ENCODE measurements at regions of chr17 and their contacts with region 1.

Region 1: DNA sequence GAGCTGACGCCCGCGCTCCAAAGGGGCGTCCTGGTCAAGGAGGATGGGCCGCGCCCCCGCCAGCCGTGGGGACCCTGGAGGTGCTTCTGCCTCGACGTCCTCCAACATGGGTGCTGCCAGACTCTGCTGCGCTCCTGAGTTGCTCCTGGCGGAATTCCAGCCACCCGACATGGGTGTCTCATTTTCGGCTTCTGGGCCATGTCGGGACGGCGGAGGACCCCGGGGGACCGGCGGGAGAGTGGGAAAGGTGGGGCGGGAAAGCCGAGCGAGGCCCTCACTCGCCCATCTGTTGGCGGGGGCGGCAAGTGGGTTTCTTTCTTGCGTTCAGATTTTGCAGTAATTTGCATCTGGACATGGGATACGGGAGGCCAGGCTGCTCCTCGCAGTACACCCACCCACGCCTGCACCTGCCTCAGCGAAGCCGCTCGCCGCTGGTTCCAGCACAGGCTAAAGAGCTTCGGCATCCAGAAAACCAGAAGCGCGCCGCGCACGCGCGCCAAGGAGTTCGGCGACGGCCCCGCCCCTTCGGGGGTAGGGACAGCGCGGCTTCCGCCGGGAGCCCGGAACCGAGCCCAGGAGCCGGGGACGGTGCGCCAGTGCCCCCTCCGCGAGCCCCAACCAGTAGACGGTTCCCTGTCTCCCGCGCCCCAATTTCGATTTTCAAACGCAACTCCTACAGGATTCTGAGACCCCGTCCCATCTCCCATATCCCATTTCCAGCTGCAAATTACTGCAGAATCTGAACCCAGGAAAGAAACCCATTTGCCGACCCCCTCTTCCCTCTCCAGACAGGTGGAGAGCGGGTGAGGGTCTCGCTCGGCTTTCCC is at the start of gene ARMC7:
- DNase-seq: peak; percentile 77
- ATAC-seq: peak; percentile 81
- H3K4me3 ChIP-seq: peak within 1 kb of the TSS; percentile 69 to 87 (median 79)
- H3K27ac ChIP-seq: no peak within 1 kb of the TSS
- H3K4me1 ChIP-seq: peaks cover 51% of the 10 kb centered on the region
- H3K27me3 ChIP-seq: peaks cover 0 to 3% of the 10 kb centered on the region in 2 experiments; a peak in 1 of 5 replicates
- CTCF ChIP-seq: no peak
- EP300 ChIP-seq: no peak
- POLR2A ChIP-seq: peak; percentile 56 to 93; a peak in 3 of 4 replicates
- RAD21 ChIP-seq: peak; percentile 40; the same call in 1 of the 2 replicates
- total RNA-seq, gene ARMC7: 4.2 and 4.4 TPM in 2 replicates

Region 2: GRCh38 chr17:75034236-75034908 is 75.2 kb before region 1 on chr17:
- CTCF ChIA-PET with region 1: no interaction called
- POLR2A ChIA-PET with region 1: interaction called, 10 read pairs
- in situ Hi-C with region 1: no loop called
- intact Hi-C with region 1: no loop called
- DNase-seq: peak; percentile 94
- ATAC-seq: peak; percentile 58
- H3K4me3 ChIP-seq: peak overlapping the region; percentile 76 to 93 (median 91)
- H3K27ac ChIP-seq: peak overlapping the region; percentile 94
- H3K4me1 ChIP-seq: peaks cover 37% of the 10 kb centered on the region
- H3K27me3 ChIP-seq: peaks cover 0 to 6% of the 10 kb centered on the region in 2 experiments; a peak in 3 of 5 replicates
- CTCF ChIP-seq: peak; percentile 48
- EP300 ChIP-seq: no peak
- POLR2A ChIP-seq: no peak
- RAD21 ChIP-seq: no peak

Region 3: GRCh38 chr17:75077496-75078283 is 31.9 kb before region 1 on chr17:
- CTCF ChIA-PET with region 1: no interaction called
- POLR2A ChIA-PET with region 1: interaction called, 10 read pairs
- in situ Hi-C with region 1: no loop called
- intact Hi-C with region 1: loop called (anchors 5 kb)
- DNase-seq: no peak
- ATAC-seq: no peak; the same call in 2 of the 3 replicates
- H3K4me3 ChIP-seq: peak overlapping the region; percentile 32 to 66 (median 46); a peak in 5 of 6 replicates
- H3K27ac ChIP-seq: no peak overlapping the region
- H3K4me1 ChIP-seq: peaks cover 92% of the 10 kb centered on the region
- H3K27me3 ChIP-seq: peaks cover 0 to 37% of the 10 kb centered on the region in 2 experiments; a peak in 3 of 5 replicates
- CTCF ChIP-seq: peak; percentile 28; the same call in 1 of the 2 replicates
- EP300 ChIP-seq: no peak
- POLR2A ChIP-seq: no peak
- RAD21 ChIP-seq: no peak

Region 4: DNA sequence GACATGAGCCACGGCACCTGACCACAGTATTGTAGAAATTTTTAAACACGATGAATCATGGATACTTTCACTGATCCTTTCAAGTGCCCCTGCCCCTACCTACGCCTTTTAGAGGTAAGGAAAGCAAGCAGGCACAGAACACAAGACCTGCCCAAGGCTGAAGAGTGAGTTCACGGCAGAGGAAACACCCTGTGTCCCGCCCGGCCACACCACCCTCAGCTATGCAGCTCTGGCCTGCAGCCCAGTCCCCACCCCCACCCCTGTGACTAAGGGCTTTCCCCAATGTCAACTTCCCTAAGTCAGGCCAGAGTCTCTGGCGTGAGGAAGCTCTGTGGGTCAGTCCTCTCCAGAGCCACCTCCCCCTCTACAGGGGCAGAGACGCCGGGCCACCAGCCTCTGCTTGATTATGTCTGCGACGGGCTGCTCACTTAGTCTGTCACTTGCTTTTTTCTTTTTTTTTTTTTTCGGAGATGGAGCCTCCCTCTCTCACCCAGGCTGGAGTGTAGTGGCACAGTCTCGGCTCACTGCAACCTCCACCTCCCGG is 13.5 kb before region 1 on chr17:
- CTCF ChIA-PET with region 1: interaction called, 3 read pairs
- POLR2A ChIA-PET with region 1: interaction called, 14 read pairs
- in situ Hi-C with region 1: no loop called
- intact Hi-C with region 1: no loop called
- DNase-seq: peak; percentile 91
- ATAC-seq: peak; percentile 66
- H3K4me3 ChIP-seq: peak overlapping the region in 1 of 3 experiments; percentile 22; a peak in 1 of 6 replicates
- H3K27ac ChIP-seq: no peak overlapping the region
- H3K4me1 ChIP-seq: peaks cover 61% of the 10 kb centered on the region
- H3K27me3 ChIP-seq: peaks cover 3 to 25% of the 10 kb centered on the region in 2 experiments; a peak in 3 of 5 replicates
- CTCF ChIP-seq: peak; percentile 14
- EP300 ChIP-seq: peak; percentile 69 to 79; a peak in 3 of 4 replicates
- POLR2A ChIP-seq: 0 out of 4 replicates have a peak, but pooled peaks of 1 of the 2 experiments have one; percentile 26
- RAD21 ChIP-seq: peak; percentile 24; the same call in 1 of the 2 replicates

Region 5: DNA sequence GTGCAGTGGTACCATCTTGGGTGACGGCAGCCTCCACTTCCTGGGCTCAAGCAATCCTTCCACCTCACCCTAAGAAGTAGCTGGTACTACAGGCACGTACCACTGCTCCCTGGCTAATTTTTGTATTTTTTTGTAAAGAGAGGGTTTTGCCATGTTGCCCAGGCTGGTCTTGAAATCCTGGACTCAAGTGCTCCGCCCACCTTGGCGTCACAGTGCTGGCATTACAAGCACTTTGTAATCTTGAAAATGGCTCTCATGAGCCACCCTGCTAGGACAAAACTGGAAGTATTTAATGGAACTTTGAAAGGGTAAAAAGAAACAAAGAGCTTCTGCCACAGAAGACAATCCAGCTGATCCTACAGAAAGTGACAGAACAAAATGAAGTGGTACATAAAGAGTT is 63.9 kb after region 1 on chr17:
- CTCF ChIA-PET with region 1: interaction called, 23 read pairs
- POLR2A ChIA-PET with region 1: interaction called, 8 read pairs
- in situ Hi-C with region 1: no loop called
- intact Hi-C with region 1: loop called (anchors 1 kb)
- DNase-seq: no peak
- ATAC-seq: no peak
- H3K4me3 ChIP-seq: no peak overlapping the region
- H3K27ac ChIP-seq: no peak overlapping the region
- H3K4me1 ChIP-seq: no peaks in the 10 kb centered on the region
- H3K27me3 ChIP-seq: no peaks in the 10 kb centered on the region
- CTCF ChIP-seq: no peak
- EP300 ChIP-seq: no peak
- POLR2A ChIP-seq: no peak
- RAD21 ChIP-seq: no peak

Region 6: GRCh38 chr17:75205037-75205792 is 95.6 kb after region 1 on chr17 and contains the start of gene NUP85:
- CTCF ChIA-PET with region 1: interaction called, 10 read pairs
- POLR2A ChIA-PET with region 1: interaction called, 15 read pairs
- in situ Hi-C with region 1: no loop called
- intact Hi-C with region 1: loop called (anchors 1 kb)
- DNase-seq: peak; percentile 96
- ATAC-seq: peak; percentile 88
- H3K4me3 ChIP-seq: peak within 1 kb of the TSS; percentile 82 to 96 (median 86)
- H3K27ac ChIP-seq: peak within 1 kb of the TSS; percentile 97
- H3K4me1 ChIP-seq: peaks cover 40% of the 10 kb centered on the region
- H3K27me3 ChIP-seq: no peaks in the 10 kb centered on the region; a peak in 1 of 5 replicates
- CTCF ChIP-seq: peak; percentile 12
- EP300 ChIP-seq: peak in 1 of 2 experiments; percentile 16; a peak in 1 of 4 replicates
- POLR2A ChIP-seq: peak; percentile 87 to 92
- RAD21 ChIP-seq: peak; percentile 9; the same call in 1 of the 2 replicates
- total RNA-seq, gene NUP85: 122 and 124 TPM in 2 replicates

Region 7: DNA sequence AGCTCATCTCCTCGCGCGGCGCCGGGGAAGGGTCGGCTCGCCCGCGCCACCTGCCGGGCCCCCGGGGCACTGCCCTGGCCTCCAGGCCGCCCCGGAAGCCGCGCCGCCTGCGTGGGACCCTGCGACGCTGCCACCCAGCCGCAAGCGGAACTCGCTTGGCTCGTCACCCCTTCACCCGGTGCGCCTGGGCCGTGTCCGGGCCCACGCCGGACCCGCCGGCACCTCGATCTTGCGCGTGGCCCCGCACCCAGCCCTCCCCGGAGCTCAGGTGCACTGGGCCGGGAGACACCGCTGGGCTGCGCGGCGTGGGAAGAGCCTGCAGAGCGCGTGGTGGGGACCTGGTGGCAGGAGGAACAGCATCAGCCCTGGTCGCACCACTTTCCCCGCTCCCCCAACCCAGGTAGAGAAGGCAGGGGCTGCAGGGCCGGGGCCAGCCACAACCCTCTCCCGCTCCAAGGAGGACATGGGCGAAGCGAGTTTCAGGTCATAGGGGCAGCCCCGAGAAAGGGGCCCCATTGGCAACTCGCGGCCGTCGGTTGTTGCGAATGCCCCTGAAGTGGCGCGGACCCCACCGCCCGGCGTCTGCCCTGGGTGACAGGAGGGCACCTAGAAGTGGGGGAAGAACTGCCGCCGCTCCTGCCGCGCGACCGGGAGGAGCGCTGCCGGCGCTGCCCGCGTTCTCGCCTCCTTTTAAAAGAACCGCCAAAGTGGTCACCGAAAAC is 161.8 kb after region 1 on chr17:
- CTCF ChIA-PET with region 1: no interaction called
- POLR2A ChIA-PET with region 1: no interaction called
- in situ Hi-C with region 1: no loop called
- intact Hi-C with region 1: no loop called
- DNase-seq: peak; percentile 58
- ATAC-seq: peak; percentile 36
- H3K4me3 ChIP-seq: peak overlapping the region; percentile 91 to 98 (median 94)
- H3K27ac ChIP-seq: peak overlapping the region; percentile 77
- H3K4me1 ChIP-seq: peaks cover 43% of the 10 kb centered on the region
- H3K27me3 ChIP-seq: no peaks in the 10 kb centered on the region
- CTCF ChIP-seq: peak; percentile 70
- EP300 ChIP-seq: no peak
- POLR2A ChIP-seq: peak in 1 of 2 experiments; percentile 71; a peak in 2 of 4 replicates
- RAD21 ChIP-seq: peak; percentile 87

Region 8: GRCh38 chr17:75412455-75413317 is 303.1 kb after region 1 on chr17:
- CTCF ChIA-PET with region 1: no interaction called
- POLR2A ChIA-PET with region 1: no interaction called
- in situ Hi-C with region 1: loop called (anchors 5 kb)
- intact Hi-C with region 1: loop called (anchors 5 kb)
- DNase-seq: peak; percentile 79
- ATAC-seq: peak; percentile 78
- H3K4me3 ChIP-seq: peak overlapping the region in 1 of 3 experiments; percentile 35; a peak in 1 of 6 replicates
- H3K27ac ChIP-seq: no peak overlapping the region
- H3K4me1 ChIP-seq: peaks cover 33% of the 10 kb centered on the region
- H3K27me3 ChIP-seq: peaks cover 0 to 5% of the 10 kb centered on the region in 2 experiments; a peak in 1 of 5 replicates
- CTCF ChIP-seq: peak; percentile 98
- EP300 ChIP-seq: no peak
- POLR2A ChIP-seq: no peak
- RAD21 ChIP-seq: peak; percentile 96